CD4-positive, alpha-beta T cell (primary cell): ENCODE measurements at regions of chr2 and their contacts with region 1.

Region 1: GRCh38 chr2:38409156-38410122 is 32.4 kb upstream of the ATL2 start:
- DNase-seq: no peak
- ATAC-seq: no peak
- H3K4me3 ChIP-seq: no peak overlapping the region
- H3K4me3 Mint-ChIP-seq: no peak overlapping the region
- H3K27ac ChIP-seq: no peak overlapping the region
- H3K27ac Mint-ChIP-seq: no peak overlapping the region
- H3K4me1 ChIP-seq: no peaks in the 10 kb centered on the region
- H3K4me1 Mint-ChIP-seq: no peaks in the 10 kb centered on the region
- H3K27me3 ChIP-seq: no peaks in the 10 kb centered on the region
- H3K27me3 Mint-ChIP-seq: no peaks in the 10 kb centered on the region
- CTCF ChIP-seq: no peak

Region 2: GRCh38 chr2:38344813-38345212 is 64.6 kb before region 1 on chr2:
- CTCF ChIA-PET with region 1: no interaction called
- POLR2A ChIA-PET with region 1: no interaction called
- intact Hi-C with region 1: loop called in 1 of 2 experiments (anchors 5 kb)
- DNase-seq: no peak
- ATAC-seq: no peak
- H3K4me3 ChIP-seq: no peak overlapping the region
- H3K4me3 Mint-ChIP-seq: no peak overlapping the region
- H3K27ac ChIP-seq: no peak overlapping the region
- H3K27ac Mint-ChIP-seq: no peak overlapping the region
- H3K4me1 ChIP-seq: no peaks in the 10 kb centered on the region
- H3K4me1 Mint-ChIP-seq: no peaks in the 10 kb centered on the region
- H3K27me3 ChIP-seq: no peaks in the 10 kb centered on the region
- H3K27me3 Mint-ChIP-seq: no peaks in the 10 kb centered on the region
- CTCF ChIP-seq: no peak

Region 3: GRCh38 chr2:38394903-38395341 is 14.5 kb before region 1 on chr2:
- CTCF ChIA-PET with region 1: no interaction called
- POLR2A ChIA-PET with region 1: no interaction called
- intact Hi-C with region 1: no loop called
- DNase-seq: no peak
- ATAC-seq: no peak
- H3K4me3 ChIP-seq: no peak overlapping the region
- H3K4me3 Mint-ChIP-seq: no peak overlapping the region
- H3K27ac ChIP-seq: no peak overlapping the region
- H3K27ac Mint-ChIP-seq: no peak overlapping the region
- H3K4me1 ChIP-seq: no peaks in the 10 kb centered on the region
- H3K4me1 Mint-ChIP-seq: no peaks in the 10 kb centered on the region
- H3K27me3 ChIP-seq: peaks cover 0 to 3% of the 10 kb centered on the region in 2 experiments
- H3K27me3 Mint-ChIP-seq: no peaks in the 10 kb centered on the region
- CTCF ChIP-seq: no peak